ENCODE measurements at regions of chr14 and their contacts with region 1.

Region 1: DNA sequence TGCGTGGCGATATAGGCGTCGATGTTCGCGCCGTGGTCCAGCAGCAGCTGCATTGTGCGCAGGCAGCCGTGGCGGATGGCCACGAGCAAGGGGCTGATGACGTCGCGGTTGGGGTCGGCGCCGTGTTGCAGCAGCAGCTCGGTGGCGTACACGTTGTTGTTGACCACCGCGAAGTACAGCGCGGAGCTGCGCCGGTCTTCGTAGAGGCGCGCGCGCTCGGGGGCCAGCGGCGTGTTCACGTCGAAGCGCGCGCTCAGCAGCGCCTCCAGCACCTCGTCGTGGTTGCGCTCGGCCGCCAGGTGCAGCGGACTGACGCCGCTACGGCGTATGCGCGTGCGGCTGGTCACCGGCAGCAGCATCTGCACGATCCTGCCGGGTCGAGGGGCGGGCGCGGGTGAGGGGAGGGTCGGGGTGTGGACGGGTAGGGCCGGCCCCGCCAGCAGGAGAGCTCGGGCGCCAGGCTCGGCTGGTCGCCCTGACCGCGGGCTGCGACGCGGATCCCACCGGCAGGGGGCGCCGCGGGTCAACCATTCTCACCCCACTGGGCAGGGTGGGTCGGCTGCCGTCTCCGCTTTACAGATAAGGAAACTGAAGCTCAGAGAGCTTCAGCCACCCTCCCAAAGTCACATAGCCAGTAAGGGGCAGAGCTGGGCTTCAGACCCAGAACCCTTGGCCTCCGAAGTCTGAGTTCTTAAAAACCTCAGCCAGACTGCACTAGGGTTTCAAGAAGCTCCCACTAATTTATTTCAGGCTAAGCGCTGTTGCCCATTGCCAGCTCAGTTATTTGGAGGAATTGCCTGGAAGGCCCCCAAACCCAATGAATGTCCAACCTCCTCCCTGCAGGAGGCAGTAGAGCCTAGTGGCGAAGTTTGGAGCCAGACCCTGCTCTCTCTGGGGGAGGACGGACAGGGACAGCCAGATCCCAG is 12.4 kb downstream of the FAM181A start:
- DNase-seq: peak; percentile 83 to 86 (median 86)
- H3K4me3 ChIP-seq: peak overlapping the region in 2 of 3 experiments; percentile 8 to 70
- H3K4me3 Mint-ChIP-seq: peak overlapping the region; percentile 70 to 82
- H3K27ac ChIP-seq: no peak overlapping the region
- H3K27ac Mint-ChIP-seq: peak overlapping the region in 3 of 7 donors; percentile 36 to 54 (median 42)
- H3K4me1 ChIP-seq: peaks cover 12 to 17% of the 10 kb centered on the region in 2 donors
- H3K4me1 Mint-ChIP-seq: peaks cover 14% of the 10 kb centered on the region
- H3K27me3 ChIP-seq: peaks cover 0 to 8% of the 10 kb centered on the region in 2 donors
- H3K27me3 Mint-ChIP-seq: peaks cover 13 to 19% (median 16%) of the 10 kb centered on the region in 3 donors
- CTCF ChIP-seq: peak; percentile 97

Region 2: DNA sequence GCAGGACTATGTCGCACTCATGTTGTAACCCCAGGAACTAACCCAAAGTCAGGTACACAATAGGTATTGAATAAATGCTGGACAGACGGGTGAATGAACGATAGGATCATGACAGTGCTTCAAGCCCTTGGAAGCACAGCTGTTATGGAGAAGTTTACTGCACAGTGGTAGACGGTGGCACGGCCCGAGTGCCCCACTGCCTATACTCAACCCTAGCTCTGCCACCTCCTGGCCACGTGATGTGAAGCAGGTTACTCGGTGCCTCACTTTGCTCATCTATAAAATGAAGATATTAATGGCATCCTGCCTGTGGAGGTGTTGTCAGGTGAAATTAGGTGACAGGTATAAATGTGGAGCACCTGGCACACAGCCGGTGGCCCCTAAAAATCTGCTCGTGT is 31.0 kb after region 1 on chr14:
- intact Hi-C with region 1: loop called in 1 of 2 experiments (anchors 2 kb)
- DNase-seq: peak; percentile 79 to 83 (median 80)
- H3K4me3 ChIP-seq: peak overlapping the region; percentile 55 to 77 (median 69)
- H3K4me3 Mint-ChIP-seq: peak overlapping the region; percentile 90 to 98
- H3K27ac ChIP-seq: peak overlapping the region in 1 of 2 donors; percentile 83
- H3K27ac Mint-ChIP-seq: peak overlapping the region; percentile 23 to 91 (median 88)
- H3K4me1 ChIP-seq: peaks cover 54 to 62% of the 10 kb centered on the region in 2 donors
- H3K4me1 Mint-ChIP-seq: peaks cover 68% of the 10 kb centered on the region
- H3K27me3 ChIP-seq: no peaks in the 10 kb centered on the region
- H3K27me3 Mint-ChIP-seq: peaks cover 3 to 14% (median 6%) of the 10 kb centered on the region in 3 donors
- CTCF ChIP-seq: peak; percentile 82

Region 3: DNA sequence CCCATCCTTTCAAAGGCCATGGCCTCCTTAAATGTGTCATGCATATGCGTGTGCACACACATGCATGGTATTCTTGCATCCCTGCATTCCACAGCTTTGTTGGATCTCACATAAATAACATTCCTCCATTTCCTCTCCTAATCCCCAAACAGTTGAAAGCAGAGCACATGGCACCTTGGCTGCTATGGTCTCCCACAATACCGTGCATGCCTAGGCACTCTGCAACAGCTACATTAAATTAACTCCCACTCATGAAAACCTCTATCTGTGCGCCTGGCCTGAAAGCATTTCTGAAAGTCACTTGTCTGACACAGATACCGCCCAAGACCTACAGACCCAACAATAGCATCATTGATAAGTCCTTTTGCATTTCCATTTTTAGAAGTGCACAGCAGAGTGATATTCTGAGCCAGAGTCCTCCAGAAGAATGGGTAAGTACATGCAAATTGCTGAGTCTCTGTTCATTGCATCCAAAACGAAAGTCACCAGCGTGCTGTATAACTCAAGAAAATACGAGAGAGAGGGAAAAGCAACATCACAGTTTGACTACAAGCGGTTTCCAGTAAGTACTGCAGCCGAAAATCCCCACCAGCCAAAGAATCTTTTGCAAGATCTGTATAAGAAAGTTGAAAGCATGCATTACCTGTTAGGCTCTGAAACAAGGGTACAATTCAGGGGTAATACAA is 36.4 kb after region 1 on chr14:
- intact Hi-C with region 1: loop called (anchors 2 kb)
- DNase-seq: no peak
- H3K4me3 ChIP-seq: no peak overlapping the region
- H3K4me3 Mint-ChIP-seq: no peak overlapping the region
- H3K27ac ChIP-seq: no peak overlapping the region
- H3K27ac Mint-ChIP-seq: peak overlapping the region in 2 of 7 donors; percentile 16 to 31
- H3K4me1 ChIP-seq: peaks cover 24% of the 10 kb centered on the region in 2 donors
- H3K4me1 Mint-ChIP-seq: peaks cover 36% of the 10 kb centered on the region
- H3K27me3 ChIP-seq: no peaks in the 10 kb centered on the region
- H3K27me3 Mint-ChIP-seq: peaks cover 2 to 6% (median 5%) of the 10 kb centered on the region in 3 donors
- CTCF ChIP-seq: no peak

Region 4: GRCh38 chr14:94001501-94002396 is 62.2 kb after region 1 on chr14:
- intact Hi-C with region 1: loop called (anchors 1 kb)
- DNase-seq: peak; percentile 64 to 74 (median 73)
- H3K4me3 ChIP-seq: no peak overlapping the region
- H3K4me3 Mint-ChIP-seq: no peak overlapping the region
- H3K27ac ChIP-seq: no peak overlapping the region
- H3K27ac Mint-ChIP-seq: peak overlapping the region in 1 of 7 donors; percentile 2
- H3K4me1 ChIP-seq: no peaks in the 10 kb centered on the region
- H3K4me1 Mint-ChIP-seq: peaks cover 4% of the 10 kb centered on the region
- H3K27me3 ChIP-seq: no peaks in the 10 kb centered on the region
- H3K27me3 Mint-ChIP-seq: peaks cover 5 to 14% (median 9%) of the 10 kb centered on the region in 3 donors
- CTCF ChIP-seq: peak; percentile 96

Region 5: DNA sequence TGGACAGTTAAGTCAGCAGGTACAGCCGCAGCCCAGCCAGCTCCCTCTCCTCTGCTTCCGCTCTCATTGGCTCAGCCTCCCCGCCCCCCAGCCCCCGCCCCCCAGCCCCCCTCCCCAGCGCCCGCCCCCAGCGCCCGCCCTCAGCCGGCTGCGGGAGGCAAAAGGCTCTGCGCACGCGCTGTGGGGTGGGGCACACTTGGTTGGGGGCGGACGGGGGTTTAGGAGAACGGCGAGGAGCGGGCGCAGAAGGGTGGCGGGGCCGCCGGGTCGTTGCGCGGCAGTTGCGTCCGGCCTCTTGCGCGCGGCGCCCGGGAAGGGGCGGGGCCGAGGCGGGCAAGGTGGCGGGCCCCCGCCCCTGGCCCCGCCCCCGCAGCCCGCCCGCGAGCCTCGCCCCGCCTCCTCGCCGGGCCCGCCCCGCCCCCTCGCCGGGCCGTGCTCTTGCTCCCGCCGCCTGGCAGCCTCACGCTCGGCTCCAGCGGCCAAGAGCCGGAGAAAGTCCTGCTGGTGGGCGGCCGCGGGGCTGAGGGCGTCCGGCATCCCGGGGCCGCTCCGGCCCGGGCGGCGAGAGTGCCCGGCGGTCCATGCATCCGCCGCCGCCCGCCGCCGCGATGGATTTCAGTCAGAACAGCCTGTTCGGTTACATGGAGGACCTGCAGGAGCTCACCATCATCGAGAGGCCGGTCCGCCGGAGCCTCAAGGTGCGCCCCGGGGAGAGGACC is 234.5 kb after region 1 on chr14 and contains the start of gene PPP4R4:
- intact Hi-C with region 1: loop called in 1 of 2 experiments (anchors 10 kb)
- DNase-seq: peak; percentile 56 to 69 (median 59)
- H3K4me3 ChIP-seq: peak within 1 kb of the TSS; percentile 47 to 74 (median 49)
- H3K4me3 Mint-ChIP-seq: peak within 1 kb of the TSS; percentile 76 to 93
- H3K27ac ChIP-seq: no peak within 1 kb of the TSS
- H3K27ac Mint-ChIP-seq: peak within 1 kb of the TSS in 4 of 7 donors; percentile 10 to 72 (median 46)
- H3K4me1 ChIP-seq: peaks cover 14 to 18% of the 10 kb centered on the region in 2 donors
- H3K4me1 Mint-ChIP-seq: peaks cover 21% of the 10 kb centered on the region
- H3K27me3 ChIP-seq: peaks cover 54 to 65% of the 10 kb centered on the region in 2 donors
- H3K27me3 Mint-ChIP-seq: peaks cover 58 to 75% (median 63%) of the 10 kb centered on the region in 3 donors
- CTCF ChIP-seq: no peak
- polyA plus RNA-seq, gene PPP4R4: 0.08 TPM in 1 of 3 donors, not detected in the others